PC-9 (cell line): ENCODE measurements at regions of chr13 and their contacts with region 1.

Region 1: DNA sequence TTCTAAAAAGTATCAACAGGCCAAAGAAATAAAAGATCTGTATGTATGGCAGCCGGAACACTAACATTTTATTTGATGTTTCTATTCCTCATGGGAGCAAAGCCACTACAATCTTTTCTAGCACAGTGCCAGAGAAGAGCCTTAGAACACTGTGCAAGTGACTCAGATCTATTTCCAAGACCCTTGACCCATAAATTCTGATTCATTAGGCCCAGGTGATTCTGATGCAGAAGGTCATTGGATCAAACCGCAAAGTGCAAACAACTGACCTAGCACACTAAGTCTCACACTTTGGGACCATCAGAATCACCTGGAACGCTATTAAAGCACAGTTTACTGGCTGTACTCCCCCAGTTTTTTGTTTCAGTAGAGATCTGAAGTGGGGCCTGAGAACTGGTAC is 87.6 kb downstream of the MYCBP2 start:
- DNase-seq: no peak
- H3K4me3 ChIP-seq: no peak overlapping the region
- H3K27ac ChIP-seq: no peak overlapping the region
- H3K4me1 ChIP-seq: no peaks in the 10 kb centered on the region
- H3K27me3 ChIP-seq: no peaks in the 10 kb centered on the region
- CTCF ChIP-seq: no peak

Region 2: DNA sequence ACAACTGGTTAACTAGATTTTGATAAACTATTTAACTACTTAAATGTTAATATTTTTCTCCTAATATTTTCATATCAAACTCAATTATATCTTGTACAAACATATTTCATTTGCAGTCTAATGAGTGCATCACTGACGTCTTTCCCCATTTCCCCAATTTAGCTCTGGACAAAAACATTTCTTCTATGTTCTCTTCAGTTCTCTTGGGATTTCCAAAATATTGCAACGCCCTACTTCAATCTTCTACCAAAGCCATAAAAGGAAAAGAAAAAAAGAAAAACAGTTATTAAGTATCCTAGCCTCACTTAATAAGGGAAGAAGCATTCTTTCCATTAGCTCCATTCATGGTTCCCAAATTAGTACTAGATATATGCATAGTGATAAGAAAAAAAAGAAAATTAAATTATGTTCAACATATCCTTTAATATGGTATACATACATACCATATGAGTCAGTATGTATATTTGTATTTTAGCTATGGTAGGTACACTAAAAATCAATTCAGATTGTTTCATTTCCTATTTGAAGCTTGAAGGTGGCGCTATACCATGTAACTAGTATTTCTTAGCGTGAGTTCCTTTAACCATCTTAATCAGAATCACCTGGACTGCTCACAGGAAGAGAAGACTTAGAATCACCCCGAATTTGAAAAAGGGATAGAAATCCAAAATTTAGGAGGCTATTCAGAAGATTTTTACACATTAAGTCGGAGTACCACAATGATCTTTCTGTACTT is 222.3 kb before region 1 on chr13:
- CTCF ChIA-PET with region 1: no interaction called
- POLR2A ChIA-PET with region 1: no interaction called
- intact Hi-C with region 1: loop called (anchors 10 kb)
- DNase-seq: no peak
- H3K4me3 ChIP-seq: no peak overlapping the region
- H3K27ac ChIP-seq: no peak overlapping the region
- H3K4me1 ChIP-seq: no peaks in the 10 kb centered on the region
- H3K27me3 ChIP-seq: no peaks in the 10 kb centered on the region
- CTCF ChIP-seq: no peak

Region 3: DNA sequence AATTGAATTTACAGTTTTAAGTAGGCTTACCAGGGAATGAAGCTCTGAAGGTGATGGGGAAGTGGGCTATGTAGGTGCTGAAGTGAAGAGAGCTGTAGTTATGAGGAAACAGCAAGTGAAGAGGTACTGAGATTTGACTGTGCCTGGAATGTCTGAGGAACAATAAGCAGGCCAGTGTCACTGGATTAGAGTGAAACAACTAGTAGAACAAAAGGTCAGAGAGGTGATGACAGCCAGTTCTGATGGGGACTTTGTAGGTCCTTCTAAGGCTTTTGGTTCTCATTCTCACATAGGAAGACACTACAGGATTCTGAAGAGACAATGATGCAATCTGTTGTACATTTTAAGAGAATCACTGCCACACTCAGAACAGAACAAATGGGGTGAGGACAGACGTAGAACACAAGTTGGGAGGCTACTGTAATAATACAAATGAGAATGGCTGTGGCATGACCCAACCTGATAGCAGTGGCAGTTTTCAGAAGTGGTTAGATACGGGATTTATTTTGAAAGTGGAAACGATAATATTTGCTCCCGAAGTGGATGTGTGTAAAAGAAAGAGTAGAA is 43.2 kb before region 1 on chr13:
- CTCF ChIA-PET with region 1: no interaction called
- POLR2A ChIA-PET with region 1: no interaction called
- intact Hi-C with region 1: no loop called
- DNase-seq: no peak
- H3K4me3 ChIP-seq: no peak overlapping the region
- H3K27ac ChIP-seq: no peak overlapping the region
- H3K4me1 ChIP-seq: no peaks in the 10 kb centered on the region
- H3K27me3 ChIP-seq: no peaks in the 10 kb centered on the region
- CTCF ChIP-seq: no peak

Region 4: DNA sequence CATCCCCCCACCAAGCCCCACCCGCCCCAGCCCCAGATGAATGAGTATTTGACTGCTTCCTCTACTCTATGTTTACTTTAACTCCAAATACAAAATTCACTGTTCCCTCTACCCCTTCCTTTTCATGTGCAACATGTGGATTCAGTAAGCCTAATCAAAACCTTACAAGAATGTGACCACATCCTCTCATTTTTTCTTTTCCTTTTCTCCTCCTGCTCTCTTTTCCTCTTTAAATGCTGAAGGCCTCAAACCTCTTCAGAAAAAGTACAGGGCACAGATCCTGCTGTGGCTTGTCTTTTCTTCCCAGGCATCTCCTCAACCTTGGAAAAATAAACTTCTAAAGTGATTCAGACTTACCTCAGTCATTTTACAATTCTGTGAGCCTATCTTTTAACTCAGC is 31.4 kb before region 1 on chr13:
- CTCF ChIA-PET with region 1: no interaction called
- POLR2A ChIA-PET with region 1: no interaction called
- intact Hi-C with region 1: no loop called
- DNase-seq: no peak
- H3K4me3 ChIP-seq: no peak overlapping the region
- H3K27ac ChIP-seq: no peak overlapping the region
- H3K4me1 ChIP-seq: no peaks in the 10 kb centered on the region
- H3K27me3 ChIP-seq: no peaks in the 10 kb centered on the region
- CTCF ChIP-seq: no peak